Activated naive CD4-positive, alpha-beta T cell treated with anti-CD3 and anti-CD28 coated beads for 36 hours (primary cell): ENCODE measurements at regions of chr10 and their contacts with region 1.

Region 1: DNA sequence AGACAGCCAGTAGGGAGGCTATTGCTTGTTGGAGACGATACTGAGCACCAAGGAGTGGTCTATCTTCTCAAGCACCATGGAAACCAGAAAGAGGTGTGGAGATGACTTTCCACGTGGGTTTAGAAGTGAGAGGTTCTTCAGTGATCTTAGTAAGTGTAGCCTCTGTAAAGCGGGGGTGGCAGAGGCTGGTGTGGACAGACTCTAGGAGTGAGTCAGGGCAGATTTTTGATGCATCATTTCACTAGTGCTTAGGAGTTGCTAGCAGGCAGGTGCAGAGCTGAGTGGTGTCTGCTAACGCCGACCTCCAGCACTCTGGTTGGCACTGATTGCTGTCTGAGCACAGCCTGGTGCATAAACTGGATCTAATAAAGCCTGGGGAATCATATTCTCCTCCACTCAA is 78.4 kb upstream of the ADO start:
- DNase-seq: peak; percentile 69
- H3K4me3 Mint-ChIP-seq: no peak overlapping the region
- H3K27ac Mint-ChIP-seq: no peak overlapping the region
- H3K4me1 Mint-ChIP-seq: peaks cover 39% of the 10 kb centered on the region
- H3K27me3 Mint-ChIP-seq: peaks cover 3% of the 10 kb centered on the region

Region 2: GRCh38 chr10:62414359-62414758 is 311.8 kb before region 1 on chr10:
- CTCF ChIA-PET with region 1: no interaction called
- intact Hi-C with region 1: no loop called
- DNase-seq: no peak
- H3K4me3 Mint-ChIP-seq: no peak overlapping the region
- H3K27ac Mint-ChIP-seq: no peak overlapping the region
- H3K4me1 Mint-ChIP-seq: no peaks in the 10 kb centered on the region
- H3K27me3 Mint-ChIP-seq: peaks cover 27% of the 10 kb centered on the region

Region 3: GRCh38 chr10:62811159-62811875 is 85.2 kb after region 1 on chr10:
- CTCF ChIA-PET with region 1: no interaction called
- intact Hi-C with region 1: loop called (anchors 1 kb)
- DNase-seq: peak; percentile 91
- H3K4me3 Mint-ChIP-seq: peak overlapping the region; percentile 30
- H3K27ac Mint-ChIP-seq: peak overlapping the region; percentile 79
- H3K4me1 Mint-ChIP-seq: peaks cover 78% of the 10 kb centered on the region
- H3K27me3 Mint-ChIP-seq: no peaks in the 10 kb centered on the region

Region 4: GRCh38 chr10:63157845-63158624 is 431.9 kb after region 1 on chr10:
- CTCF ChIA-PET with region 1: no interaction called
- intact Hi-C with region 1: no loop called
- DNase-seq: peak; percentile 67
- H3K4me3 Mint-ChIP-seq: no peak overlapping the region
- H3K27ac Mint-ChIP-seq: no peak overlapping the region
- H3K4me1 Mint-ChIP-seq: peaks cover 11% of the 10 kb centered on the region
- H3K27me3 Mint-ChIP-seq: no peaks in the 10 kb centered on the region